Head of caudate nucleus (tissue), 42 donors: ENCODE measurements at regions of chr5 and their contacts with region 1.

Region 1: DNA sequence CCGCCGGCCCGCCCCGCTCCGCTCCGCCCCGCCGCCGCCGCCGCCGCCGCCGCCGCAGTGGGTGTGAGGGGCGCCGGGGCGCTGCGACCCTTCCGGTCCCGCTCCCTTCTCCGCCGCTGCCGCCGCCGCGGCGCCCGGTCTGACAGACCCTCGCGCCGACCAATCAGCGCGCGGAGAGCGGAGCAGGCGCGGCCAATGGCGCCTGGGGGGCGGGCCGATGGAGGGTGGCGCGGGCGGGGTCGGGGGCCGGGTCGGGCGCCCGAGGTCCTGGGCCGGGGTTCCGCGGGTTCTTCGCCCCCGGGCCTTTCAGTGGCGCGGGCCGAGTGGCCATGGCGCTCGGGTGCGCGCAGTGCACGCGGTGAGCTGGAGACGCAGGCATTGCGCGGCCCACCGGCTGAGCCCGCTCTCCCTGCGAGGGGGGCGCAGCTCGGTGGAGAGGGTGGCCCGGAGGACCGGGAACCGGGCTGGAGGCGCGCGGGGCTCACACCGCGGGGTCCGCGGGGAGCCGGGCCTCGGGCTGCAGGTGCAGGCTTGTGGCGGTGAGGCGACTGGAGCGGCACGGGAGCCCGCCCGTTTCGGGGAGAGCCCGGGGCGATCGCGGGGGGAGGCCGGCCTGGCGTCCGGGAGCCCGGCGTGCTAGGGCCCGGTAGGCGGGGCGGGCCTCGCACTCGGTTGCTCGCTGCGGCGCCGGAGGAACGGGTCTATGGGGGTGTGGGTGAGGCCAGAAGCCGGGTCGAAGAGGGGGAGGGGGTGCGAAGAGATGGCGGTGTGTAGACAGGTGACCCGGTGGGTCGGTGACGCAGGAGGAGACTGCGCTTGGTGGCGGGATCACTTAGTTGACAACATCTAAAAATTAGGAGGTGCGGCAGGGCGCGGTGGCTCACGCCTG is at the start of gene MAPK9:
- DNase-seq: peak; percentile 42 to 94 (median 88)

Region 2: DNA sequence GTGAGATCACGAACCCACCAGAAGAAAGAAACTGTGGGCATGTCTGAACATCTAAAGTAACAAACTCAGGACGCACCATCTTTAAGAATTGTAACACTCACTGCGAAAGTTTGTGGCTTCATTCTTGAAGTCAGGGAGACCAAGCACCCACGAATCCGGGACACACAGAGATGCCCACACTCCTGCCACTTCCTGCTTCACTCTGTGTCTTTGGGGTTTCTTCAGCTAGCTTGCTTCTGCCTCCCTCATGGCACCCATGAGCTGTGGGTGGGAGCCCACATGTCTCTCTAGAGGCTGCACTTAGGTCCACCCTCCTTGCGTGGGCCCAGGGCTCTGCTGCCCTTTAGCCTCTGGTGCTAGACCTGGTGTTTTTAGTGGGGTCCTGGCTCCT is 140.8 kb after region 1 on chr5:
- intact Hi-C with region 1: loop called (anchors 5 kb)
- DNase-seq: no peak

Region 3: GRCh38 chr5:180470966-180471582 is 178.9 kb after region 1 on chr5:
- intact Hi-C with region 1: loop called (anchors 5 kb)
- DNase-seq: peak; percentile 49 to 91 (median 77)

Region 4: GRCh38 chr5:180575571-180575970 is 283.4 kb after region 1 on chr5:
- intact Hi-C with region 1: no loop called
- DNase-seq: no peak